ENCODE measurements at regions of chr2 and their contacts with region 1.

Region 1: DNA sequence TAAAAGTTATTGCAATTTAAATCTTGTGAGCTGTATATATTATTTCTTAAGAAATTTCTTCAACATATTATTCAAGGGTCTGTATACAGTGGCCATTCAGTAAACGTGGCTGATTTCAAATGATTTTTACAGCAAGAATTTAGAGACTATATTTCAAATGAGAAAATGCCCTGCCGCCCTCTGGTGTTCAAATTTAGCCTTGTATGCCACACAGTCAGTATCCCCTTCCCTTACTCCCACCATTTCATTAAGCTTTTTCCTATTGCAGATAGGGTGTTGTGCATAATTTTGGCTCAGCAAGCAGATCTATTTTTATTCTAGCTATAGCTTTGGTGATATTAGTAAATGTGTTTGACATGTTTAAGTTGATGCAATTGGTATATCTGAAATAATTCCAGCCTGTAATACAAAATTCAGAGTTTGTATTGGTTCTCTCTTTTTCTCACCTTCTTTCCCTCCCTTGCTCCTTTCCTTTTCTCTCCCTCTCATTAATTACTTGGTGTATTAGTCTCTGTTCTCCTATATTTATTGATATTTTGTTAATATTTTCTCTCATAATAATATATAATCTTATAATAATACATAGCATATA is 22.8 kb upstream of the SCN7A start:
- DNase-seq: peak; percentile 65
- ATAC-seq: peak; percentile 78
- H3K4me3 ChIP-seq: no peak overlapping the region
- H3K27ac ChIP-seq: no peak overlapping the region
- H3K4me1 ChIP-seq: no peaks in the 10 kb centered on the region
- H3K27me3 ChIP-seq: peaks cover 61% of the 10 kb centered on the region
- CTCF ChIP-seq: peak; percentile 89

Region 2: DNA sequence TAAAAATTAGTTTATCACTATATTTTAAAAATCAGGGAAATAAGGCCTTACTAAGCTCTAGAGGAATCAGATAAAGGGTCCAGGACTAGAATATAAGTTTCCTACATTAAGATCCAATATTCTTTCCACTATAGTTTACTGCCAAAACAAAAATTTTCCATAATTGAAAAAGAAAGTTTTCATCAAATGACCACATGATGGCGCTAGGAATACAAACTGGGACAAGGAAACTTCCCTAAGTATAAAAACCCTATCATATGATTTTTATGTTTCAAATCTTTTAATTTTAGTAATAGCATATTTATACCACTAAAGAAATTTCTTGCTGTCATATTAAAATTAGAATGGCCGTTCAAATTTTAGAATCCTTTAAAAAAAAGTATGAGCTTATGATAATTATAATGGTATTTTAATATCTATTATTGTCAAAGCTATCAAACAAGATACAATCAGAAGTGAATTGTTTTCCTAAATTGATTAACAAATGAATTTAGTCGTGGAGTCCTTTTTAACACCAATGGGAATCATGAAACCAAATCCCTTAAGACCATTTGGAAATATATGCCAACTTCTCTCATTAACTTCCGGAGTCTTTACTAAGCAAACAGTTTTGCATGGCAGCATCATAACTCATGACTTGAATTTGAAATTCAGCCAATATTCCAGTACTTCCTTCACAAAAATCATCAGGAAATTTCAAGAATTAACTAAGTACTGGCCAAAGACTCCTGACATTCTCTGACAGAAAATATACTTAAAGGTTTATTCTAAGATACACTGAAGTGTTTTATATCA is 459.2 kb before region 1 on chr2:
- CTCF ChIA-PET with region 1: no interaction called
- POLR2A ChIA-PET with region 1: no interaction called
- intact Hi-C with region 1: loop called (anchors 10 kb)
- DNase-seq: peak; percentile 68
- ATAC-seq: no peak
- H3K4me3 ChIP-seq: no peak overlapping the region
- H3K27ac ChIP-seq: no peak overlapping the region
- H3K4me1 ChIP-seq: peaks cover 5% of the 10 kb centered on the region
- H3K27me3 ChIP-seq: peaks cover 39% of the 10 kb centered on the region
- CTCF ChIP-seq: peak; percentile 94

Region 3: GRCh38 chr2:166361351-166362153 is 155.3 kb before region 1 on chr2:
- CTCF ChIA-PET with region 1: no interaction called
- POLR2A ChIA-PET with region 1: no interaction called
- intact Hi-C with region 1: loop called (anchors 5 kb)
- DNase-seq: peak; percentile 73
- ATAC-seq: peak; percentile 93
- H3K4me3 ChIP-seq: no peak overlapping the region
- H3K27ac ChIP-seq: no peak overlapping the region
- H3K4me1 ChIP-seq: peaks cover 12% of the 10 kb centered on the region
- H3K27me3 ChIP-seq: no peaks in the 10 kb centered on the region
- CTCF ChIP-seq: peak; percentile 95

Measured in PC-3 (cell line).